Natural killer cell (primary cell): ENCODE measurements at regions of chr5 and their contacts with region 1.

Region 1: DNA sequence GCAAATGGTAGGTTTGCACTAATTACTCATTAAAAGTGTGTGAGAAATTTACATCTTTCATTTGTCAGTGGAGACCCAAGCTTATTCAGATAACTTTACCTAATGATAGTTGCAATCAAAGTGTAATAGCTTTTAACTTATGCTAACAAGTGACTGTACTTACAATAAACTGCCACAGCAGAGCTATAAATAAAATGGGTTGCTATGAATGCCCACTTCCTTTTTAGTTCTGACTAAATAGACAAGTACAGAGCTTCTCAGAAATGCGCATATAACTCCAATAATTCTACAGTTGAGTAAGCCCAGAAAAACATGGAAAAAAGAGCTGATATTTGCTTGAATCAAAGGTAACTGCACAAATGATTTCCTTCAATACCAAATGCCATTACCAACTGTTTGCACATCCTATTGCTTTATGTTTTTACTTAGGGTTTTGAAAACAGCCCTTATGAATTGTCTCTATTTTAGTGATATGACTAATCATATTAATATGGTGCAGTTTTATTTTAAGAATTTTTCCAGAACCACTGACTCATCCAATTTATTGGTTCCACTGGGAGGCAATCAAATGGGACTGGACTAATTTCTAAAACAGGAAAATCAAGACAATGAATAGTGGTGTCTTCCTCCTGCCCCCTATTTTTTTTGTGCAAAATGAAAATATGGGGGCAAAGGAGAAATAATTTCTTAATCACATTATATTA is 84.1 kb downstream of the PPP2R2B start:
- DNase-seq: peak in 1 of 2 donors; percentile 12
- ATAC-seq: peak; percentile 54 to 66 (median 56)
- H3K4me3 ChIP-seq: no peak overlapping the region
- H3K4me3 Mint-ChIP-seq: peak overlapping the region; percentile 79
- H3K27ac ChIP-seq: peak overlapping the region; percentile 14
- H3K27ac Mint-ChIP-seq: peak overlapping the region; percentile 79 to 84
- H3K4me1 ChIP-seq: peaks cover 12% of the 10 kb centered on the region
- H3K4me1 Mint-ChIP-seq: peaks cover 77 to 93% of the 10 kb centered on the region in 2 donors
- H3K27me3 ChIP-seq: no peaks in the 10 kb centered on the region
- H3K27me3 Mint-ChIP-seq: no peaks in the 10 kb centered on the region
- CTCF ChIP-seq: no peak

Region 2: GRCh38 chr5:146706321-146706975 is 88.0 kb before region 1 on chr5:
- intact Hi-C with region 1: loop called (anchors 10 kb)
- DNase-seq: peak in 1 of 2 donors; percentile 11
- ATAC-seq: no peak
- H3K4me3 ChIP-seq: no peak overlapping the region
- H3K4me3 Mint-ChIP-seq: no peak overlapping the region
- H3K27ac ChIP-seq: no peak overlapping the region
- H3K27ac Mint-ChIP-seq: no peak overlapping the region
- H3K4me1 ChIP-seq: no peaks in the 10 kb centered on the region
- H3K4me1 Mint-ChIP-seq: peaks cover 50 to 70% of the 10 kb centered on the region in 2 donors
- H3K27me3 ChIP-seq: no peaks in the 10 kb centered on the region
- H3K27me3 Mint-ChIP-seq: no peaks in the 10 kb centered on the region
- CTCF ChIP-seq: no peak